Colonic mucosa (tissue), 4 donors: ENCODE measurements at regions of chr6 and their contacts with region 1.

Region 1: DNA sequence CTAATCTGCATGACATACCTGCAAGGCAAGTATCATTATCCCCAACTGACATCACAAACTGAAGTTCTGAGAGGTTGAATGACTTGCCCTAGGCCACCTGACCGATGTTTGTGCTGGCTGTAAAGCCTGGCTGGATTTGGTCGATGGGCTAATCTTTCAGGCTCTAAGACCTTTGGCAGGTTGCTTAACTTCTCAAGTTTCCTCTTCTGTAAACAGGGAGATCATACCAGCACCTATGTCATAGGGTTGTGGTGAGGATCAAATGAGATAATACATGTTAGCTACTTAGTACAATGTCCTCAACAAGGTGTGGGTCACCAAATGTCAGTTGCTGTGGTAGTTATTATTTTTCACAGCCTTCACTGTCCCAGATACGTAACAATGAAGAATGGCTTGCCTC is 14.2 kb downstream of the ANKRD66 start:
- DNase-seq: no peak
- H3K4me3 ChIP-seq: no peak overlapping the region
- H3K27ac ChIP-seq: no peak overlapping the region
- H3K4me1 ChIP-seq: no peaks in the 10 kb centered on the region
- H3K27me3 ChIP-seq: no peaks in the 10 kb centered on the region
- CTCF ChIP-seq: no peak

Region 2: DNA sequence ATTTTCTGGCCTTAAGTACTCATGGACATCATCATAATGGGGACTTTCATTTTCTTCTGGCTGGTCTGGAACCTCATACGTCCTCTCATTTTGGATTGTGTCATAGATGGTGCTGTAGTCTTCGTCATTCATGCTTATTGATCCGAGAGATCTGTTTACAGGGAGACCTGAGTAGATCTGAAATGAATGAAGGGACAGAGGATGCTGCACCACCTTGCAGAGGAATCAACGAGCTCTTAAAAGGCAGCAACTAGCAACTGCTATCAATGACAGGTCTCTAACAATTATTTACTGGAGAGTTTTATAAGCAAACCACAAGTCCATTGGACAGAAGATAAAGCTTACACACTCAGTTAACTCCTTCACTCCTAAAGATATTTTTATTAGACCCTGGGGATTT is 680.8 kb before region 1 on chr6:
- intact Hi-C with region 1: loop called (anchors 10 kb)
- DNase-seq: no peak
- H3K4me3 ChIP-seq: no peak overlapping the region
- H3K27ac ChIP-seq: no peak overlapping the region
- H3K4me1 ChIP-seq: no peaks in the 10 kb centered on the region
- H3K27me3 ChIP-seq: no peaks in the 10 kb centered on the region
- CTCF ChIP-seq: no peak